Cardiac septum (tissue), 1 donor: ENCODE measurements at regions of chr14 and their contacts with region 1.

Region 1: DNA sequence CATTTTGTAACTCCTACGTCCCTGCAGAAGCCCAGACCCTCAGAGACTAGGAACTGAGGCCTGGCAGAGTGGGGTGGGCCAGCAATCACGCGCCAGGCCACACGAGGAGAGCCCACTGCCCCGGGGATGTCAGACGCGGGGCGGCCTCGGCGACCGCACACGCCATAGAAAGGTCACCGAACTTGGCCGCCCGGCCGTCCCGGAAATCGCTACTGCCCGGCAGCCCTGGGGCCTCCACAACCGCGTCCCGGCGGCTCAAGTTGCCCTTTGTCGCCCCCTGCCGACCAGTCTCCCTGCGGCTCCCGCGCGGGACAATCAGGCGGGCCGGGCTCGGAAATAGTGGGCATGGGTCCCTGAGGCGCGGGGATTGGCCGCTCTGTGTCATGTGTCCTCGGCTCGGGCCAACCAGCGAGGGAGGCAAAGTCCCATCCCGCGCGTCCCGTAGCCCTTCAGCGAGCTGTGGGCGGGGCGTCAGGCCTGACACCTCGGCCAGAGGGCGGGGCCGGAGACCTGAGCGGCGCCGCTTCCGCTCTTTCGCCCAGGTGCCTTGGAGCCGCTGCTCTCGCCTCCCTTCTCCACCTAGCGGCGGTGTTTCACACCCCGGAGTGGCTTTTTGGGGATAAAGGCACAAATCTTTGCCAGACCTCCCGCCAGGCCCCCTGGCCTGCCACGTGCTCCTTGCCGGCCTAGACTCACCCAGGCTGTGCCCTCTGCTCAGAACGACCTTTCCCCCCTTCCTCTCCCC is 33.4 kb upstream of the DEGS2 start:
- DNase-seq: peak; percentile 100

Region 2: DNA sequence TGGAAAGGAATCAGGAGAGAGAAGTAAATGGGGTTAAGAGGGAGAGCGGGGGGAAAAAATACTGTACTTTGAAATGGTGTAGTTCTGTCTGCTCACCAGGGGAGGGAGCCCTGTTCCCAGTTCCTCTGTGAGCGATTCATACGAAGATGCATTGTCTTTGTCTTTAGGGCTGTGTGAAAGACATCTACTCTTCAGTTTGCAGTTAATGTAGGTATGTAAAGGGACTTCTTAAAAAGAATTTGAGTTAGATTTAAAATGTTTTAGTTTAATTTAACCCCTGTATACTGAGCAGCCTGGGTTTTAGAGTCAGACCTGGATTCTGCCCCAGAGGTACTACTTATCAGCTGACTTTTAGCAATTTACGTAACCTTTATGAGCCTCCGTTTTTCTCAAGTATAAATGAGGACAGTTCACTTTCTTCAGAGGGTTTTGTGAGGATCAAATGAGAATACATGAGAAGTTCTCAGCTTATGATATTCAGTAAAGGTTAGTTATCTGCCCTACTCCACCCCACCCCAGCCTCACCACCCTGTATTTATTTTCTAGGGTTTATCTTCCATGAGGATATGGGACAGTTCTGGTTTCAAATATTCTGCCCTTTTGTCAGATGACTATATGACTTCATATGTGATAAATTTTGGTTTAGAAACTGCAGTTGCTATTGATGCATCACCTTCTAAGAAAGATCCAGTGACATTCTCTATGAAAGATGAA is 210.2 kb before region 1 on chr14:
- intact Hi-C with region 1: loop called (anchors 1 kb)
- DNase-seq: no peak

Region 3: DNA sequence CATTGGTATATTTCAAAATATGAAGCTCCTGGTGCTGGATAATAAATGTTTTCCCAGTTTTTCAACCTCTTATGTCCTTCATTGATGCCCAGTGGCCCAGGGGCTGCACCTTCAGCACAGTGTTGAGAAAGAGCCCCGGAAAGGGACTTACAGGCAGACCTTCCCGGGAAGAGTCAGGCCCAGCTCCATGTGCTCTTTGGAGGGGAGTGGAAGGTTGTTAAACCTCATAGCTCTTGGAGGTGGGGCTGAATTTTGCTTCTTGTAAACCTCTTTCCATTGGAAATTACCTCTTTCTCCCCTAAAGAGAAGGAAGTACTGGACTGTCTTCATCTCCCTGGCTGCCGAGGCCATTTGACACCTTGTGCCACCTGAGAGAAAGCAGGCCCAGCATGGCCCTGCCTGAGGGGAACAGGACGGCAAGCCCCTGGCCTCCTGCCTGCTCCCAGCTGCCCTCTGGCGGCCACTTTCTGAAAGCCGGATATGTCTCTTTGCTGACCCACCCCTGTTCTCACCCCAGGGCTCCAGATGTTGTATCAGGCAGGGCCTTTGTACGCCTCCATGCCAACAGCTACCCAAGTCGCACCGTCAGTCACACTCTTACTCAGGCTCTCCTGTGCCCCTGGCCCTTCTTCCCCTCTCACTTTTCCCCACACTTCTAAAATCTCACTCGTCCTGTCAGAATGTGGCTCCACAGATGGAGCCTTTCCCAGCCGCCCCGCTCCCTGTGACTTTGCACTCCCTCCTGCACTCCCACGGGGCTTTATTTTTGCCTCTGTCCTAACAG is 84.6 kb before region 1 on chr14:
- intact Hi-C with region 1: loop called (anchors 2 kb)
- DNase-seq: peak; percentile 93

Region 4: GRCh38 chr14:100140452-100141078 is 52.3 kb before region 1 on chr14:
- intact Hi-C with region 1: loop called (anchors 5 kb)
- DNase-seq: no peak

Region 5: DNA sequence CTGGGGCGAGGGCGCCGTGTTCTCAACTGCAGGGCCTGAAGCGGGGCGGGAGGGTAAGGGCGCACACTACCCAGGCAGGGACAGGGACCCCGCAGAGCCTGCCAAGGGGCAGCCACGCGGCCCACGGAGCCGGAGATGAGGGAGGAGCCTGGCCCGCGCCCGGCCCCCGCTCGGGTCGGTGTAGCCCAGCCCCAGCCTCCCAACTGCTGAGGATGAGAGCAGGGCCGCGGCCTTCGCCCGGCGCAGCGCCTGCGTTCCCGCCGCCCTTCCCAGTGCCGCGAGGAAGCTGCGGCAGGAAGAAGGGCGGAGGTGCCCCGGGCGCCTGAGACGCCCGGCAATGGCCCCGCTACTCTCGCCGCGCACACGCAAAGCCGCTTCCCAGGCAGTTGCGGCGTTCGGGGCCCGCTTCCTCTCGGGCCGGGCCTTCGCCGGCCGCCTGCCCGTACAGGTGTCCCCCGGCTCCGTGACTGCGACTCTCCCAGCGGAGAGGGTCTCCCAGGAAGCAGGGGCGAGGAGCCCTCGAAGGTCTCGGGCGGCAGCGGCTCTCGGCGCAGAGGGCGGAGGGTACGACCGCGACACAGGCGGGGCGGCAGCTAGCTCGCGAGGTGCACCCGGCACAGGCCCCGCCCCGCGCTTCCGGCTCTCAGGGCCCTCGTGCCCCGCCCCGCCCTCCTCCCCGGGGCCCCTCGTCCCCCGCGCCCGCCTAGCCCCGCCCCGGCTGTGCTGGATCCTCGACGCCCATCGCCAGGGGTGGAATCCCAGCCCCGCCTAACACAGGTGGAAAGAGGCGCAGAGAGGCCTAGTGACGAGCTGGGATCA is 21.3 kb after region 1 on chr14:
- intact Hi-C with region 1: loop called (anchors 1 kb)
- DNase-seq: peak; percentile 95

Region 6: GRCh38 chr14:100263144-100263543 is 70.3 kb after region 1 on chr14:
- intact Hi-C with region 1: no loop called
- DNase-seq: no peak